ENCODE measurements at regions of chr20 and their contacts with region 1.

Region 1: DNA sequence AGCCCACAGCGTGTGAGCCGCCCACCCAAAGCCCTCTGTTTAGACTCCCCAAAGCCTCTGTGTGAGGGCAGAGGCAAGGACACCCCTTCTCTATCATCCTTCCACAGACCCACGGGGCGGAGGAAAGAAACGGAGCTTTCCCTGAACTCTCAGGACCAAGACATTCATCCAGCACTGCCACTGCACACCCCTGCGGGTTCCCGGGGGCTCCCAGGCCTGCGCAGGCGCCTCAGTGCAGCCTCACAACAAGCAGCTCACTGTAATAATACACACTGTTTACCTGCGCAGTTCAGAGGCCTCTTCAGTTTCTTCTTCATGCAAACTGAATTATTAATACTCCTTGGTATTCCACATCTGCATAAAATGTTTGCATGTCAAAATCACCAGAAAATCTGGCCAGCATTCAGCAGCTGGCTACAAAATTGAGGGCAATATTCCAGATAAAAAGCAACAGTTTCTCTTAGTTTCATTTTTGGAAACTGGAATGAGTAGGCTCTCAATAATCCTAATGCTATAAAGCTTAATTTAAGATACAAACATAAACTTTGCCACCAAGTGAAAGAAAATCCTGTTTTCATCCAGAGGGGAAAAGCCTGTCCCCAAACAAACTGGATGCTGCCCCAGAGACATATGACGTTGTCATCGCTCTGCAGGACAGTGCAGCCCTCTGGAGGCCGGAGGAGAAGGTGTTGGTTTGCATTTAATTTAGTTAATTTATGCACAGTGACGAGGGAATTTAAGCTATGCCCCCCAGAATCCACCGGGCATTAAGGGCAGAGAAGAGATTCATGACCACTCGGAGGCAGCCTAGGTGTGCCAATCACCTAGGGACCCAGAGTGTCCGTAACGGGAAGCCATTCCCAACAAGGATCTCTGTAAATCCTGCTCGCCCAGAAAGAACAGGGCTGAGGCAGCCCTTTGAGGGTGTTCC is 45.3 kb downstream of the NINL start:
- DNase-seq: no peak
- H3K4me3 ChIP-seq: peak overlapping the region; percentile 12; the same call in 1 of the 2 replicates
- H3K27me3 ChIP-seq: no peaks in the 10 kb centered on the region
- CTCF ChIP-seq: peak; percentile 52

Region 2: GRCh38 chr20:25525295-25526266 is 14.4 kb before region 1 on chr20:
- CTCF ChIA-PET with region 1: interaction called, 12 read pairs
- POLR2A ChIA-PET with region 1: interaction called, 3 read pairs
- DNase-seq: peak; percentile 94
- H3K4me3 ChIP-seq: no peak overlapping the region
- H3K27me3 ChIP-seq: no peaks in the 10 kb centered on the region
- CTCF ChIP-seq: no peak

Region 3: DNA sequence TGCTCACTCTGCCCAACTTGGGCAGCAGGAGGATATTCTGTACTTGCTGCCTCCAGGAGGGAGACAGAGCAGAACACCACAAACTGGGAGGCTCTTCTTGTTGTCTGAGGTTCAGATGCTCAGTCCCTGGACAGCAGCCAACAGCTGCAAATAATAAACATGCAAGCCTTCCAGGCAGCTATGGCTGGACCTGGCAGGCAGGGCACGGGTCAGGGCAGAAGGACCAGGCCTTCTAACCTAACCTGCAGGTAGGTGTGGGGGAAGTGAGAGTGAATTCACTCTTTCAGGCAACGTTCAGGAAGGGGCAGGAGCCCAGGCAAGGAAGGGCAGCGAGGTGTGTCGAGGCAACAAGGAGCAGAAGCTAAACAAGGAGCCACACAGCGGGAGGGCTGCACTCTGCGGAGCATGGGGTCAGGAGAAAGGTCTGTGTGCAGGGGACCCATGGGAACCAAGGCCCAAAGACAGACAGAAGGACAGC is 13.9 kb after region 1 on chr20:
- CTCF ChIA-PET with region 1: interaction called, 11 read pairs
- POLR2A ChIA-PET with region 1: no interaction called
- DNase-seq: no peak
- H3K4me3 ChIP-seq: no peak overlapping the region
- H3K27me3 ChIP-seq: no peaks in the 10 kb centered on the region
- CTCF ChIP-seq: 0 out of 2 replicates have a peak, but pooled peaks have one; percentile 3